AG04449 (cell line): ENCODE measurements at regions of chr3 and their contacts with region 1.

Region 1: GRCh38 chr3:188954590-188955208 is 217.1 kb upstream of the TPRG1 start:
- DNase-seq: no peak
- H3K4me3 ChIP-seq: no peak overlapping the region
- CTCF ChIP-seq: peak; percentile 89

Region 2: GRCh38 chr3:187745201-187746058 is 1209.3 kb before region 1 on chr3 and contains the start of gene BCL6:
- CTCF ChIA-PET with region 1: interaction called, 322 read pairs
- POLR2A ChIA-PET with region 1: interaction called, 5 read pairs
- DNase-seq: peak; percentile 96
- H3K4me3 ChIP-seq: peak within 1 kb of the TSS; percentile 94
- CTCF ChIP-seq: no peak

Region 3: DNA sequence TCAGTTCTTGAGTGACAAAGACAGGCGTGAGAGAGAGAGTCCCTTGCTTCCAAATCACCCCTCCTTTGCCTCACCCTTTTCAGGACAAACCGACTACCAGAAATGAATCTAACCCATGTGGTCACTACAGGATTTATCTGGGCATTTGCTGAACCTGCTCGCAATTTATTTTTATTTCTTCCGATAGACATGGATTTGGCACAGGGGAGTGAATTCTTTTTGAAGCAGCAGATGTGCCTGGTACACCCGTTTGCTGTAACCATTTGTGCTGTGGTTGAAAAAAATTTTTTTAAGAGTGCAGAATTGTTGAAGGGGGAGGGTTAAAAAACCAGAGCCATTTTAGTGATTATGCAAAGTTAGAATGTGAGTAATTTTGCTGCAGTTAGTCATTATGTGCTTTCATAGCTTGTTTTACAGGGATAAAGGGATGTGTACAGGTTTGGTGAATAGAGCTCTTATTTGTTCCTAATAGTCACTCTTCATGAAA is 358.8 kb before region 1 on chr3:
- CTCF ChIA-PET with region 1: interaction called, 11 read pairs
- POLR2A ChIA-PET with region 1: no interaction called
- DNase-seq: no peak
- H3K4me3 ChIP-seq: no peak overlapping the region
- CTCF ChIP-seq: no peak

Region 4: GRCh38 chr3:188673646-188674186 is 281.0 kb before region 1 on chr3:
- CTCF ChIA-PET with region 1: interaction called, 12 read pairs
- POLR2A ChIA-PET with region 1: no interaction called
- DNase-seq: no peak
- H3K4me3 ChIP-seq: no peak overlapping the region
- CTCF ChIP-seq: no peak

Region 5: GRCh38 chr3:188830893-188831292 is 123.8 kb before region 1 on chr3:
- CTCF ChIA-PET with region 1: interaction called, 10 read pairs
- POLR2A ChIA-PET with region 1: no interaction called
- DNase-seq: no peak
- H3K4me3 ChIP-seq: no peak overlapping the region
- CTCF ChIP-seq: no peak

Region 6: DNA sequence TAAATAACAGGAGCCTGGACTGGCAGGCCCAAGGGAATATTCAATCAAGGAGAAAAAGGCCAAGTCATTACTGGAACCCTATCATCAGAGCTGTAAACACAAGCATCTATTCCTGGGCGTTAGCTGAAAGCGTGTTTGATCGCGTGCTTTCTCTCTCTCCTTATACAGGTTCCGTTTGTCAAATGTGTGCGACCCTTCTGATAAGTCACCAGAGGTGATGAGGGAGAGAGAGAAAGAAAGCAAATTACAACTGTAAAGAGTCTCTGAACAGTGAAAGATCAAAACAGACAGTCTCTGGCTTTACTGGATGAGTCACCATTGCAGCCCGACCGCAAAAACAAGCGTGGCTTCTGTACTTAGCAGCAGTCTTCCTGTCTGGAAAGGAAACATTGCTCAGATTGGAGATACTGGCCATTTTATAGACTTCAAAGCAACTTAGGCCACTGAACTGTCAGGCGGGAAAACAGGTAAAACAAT is 177.6 kb after region 1 on chr3:
- CTCF ChIA-PET with region 1: interaction called, 10 read pairs
- POLR2A ChIA-PET with region 1: no interaction called
- DNase-seq: peak; percentile 45
- H3K4me3 ChIP-seq: no peak overlapping the region
- CTCF ChIP-seq: no peak